Activated CD8-positive, alpha-beta T cell treated with anti-CD3 and anti-CD28 coated beads for 36 hours (primary cell): ENCODE measurements at regions of chr6 and their contacts with region 1.

Region 1: DNA sequence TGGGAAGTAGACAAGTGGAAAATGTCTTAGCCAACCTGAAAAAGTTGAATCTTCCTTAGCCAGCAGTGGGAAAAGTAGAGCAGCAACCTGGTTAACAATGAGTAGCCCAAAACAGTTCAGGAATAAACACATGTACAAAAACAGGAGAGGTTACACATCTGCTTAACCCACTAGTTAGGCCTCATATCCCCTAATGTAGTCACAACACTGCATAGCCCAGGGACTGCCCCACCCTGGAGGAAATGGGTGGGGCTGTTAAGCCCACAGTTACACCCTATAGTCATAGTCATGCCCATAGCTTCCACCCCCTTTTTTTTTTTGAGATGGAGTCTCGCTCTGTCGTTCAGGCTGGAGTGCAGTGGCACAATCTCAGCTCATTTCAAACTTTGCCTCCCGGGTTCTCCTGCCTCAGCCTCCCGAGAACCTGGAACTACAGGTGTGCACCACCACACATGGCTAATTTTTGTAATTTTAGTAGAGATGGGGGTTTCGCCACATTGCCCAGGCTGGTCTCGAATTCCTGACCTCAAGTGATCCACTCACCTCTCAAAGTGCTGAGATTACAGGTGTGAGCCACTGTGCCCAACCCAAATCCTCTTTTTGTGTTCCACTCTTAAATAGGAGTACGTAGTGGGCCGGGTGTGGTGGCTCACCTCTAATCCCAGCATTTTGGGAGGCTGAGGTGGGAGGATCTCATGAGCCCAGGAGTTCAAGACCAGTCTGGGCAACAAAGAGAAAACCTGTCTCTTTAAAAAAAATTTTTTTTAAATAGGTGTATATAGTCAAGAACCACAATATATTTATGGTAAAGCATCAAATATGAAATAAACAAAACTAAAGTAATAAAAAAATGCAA is 24.5 kb downstream of the ILRUN start:
- DNase-seq: peak; percentile 87
- ATAC-seq: peak; percentile 99
- H3K4me3 Mint-ChIP-seq: peak overlapping the region; percentile 55
- H3K27ac Mint-ChIP-seq: peak overlapping the region; percentile 94
- H3K4me1 Mint-ChIP-seq: peaks cover 60% of the 10 kb centered on the region
- H3K27me3 Mint-ChIP-seq: no peaks in the 10 kb centered on the region
- CTCF ChIP-seq: no peak

Region 2: DNA sequence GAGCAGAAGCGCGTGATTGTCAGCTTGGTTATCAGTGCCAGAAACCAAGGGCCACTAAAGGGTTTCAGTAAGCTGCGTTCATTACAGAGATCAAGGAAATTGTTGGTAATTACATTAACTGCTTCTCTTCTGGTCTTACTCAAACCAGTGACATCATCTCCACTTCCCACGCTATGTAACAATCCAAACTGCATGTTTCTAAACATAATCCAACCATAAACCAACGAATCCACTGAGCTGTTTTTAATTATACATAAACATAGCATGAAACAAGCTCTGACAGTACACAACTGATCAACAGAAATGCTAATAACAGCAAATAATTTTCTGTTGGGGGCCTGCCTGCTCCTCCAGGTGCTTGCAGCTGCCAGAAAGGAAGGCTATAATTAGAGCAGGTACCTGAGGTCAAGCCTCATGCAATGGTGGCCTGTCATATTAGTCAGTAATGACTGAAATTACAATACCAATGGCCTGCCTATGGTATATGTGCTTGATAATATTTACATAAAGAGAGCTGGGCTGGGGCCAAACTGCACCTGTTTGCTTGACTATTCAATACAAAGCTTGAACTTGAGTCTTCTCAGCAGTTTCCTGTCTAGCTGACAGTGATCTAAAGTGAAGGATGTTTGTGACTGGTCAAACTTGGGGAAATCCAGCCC is 15.5 kb before region 1 on chr6:
- CTCF ChIA-PET with region 1: interaction called, 17 read pairs
- POLR2A ChIA-PET with region 1: interaction called, 17 read pairs
- intact Hi-C with region 1: no loop called
- DNase-seq: peak; percentile 63
- ATAC-seq: peak; percentile 83
- H3K4me3 Mint-ChIP-seq: peak overlapping the region; percentile 62
- H3K27ac Mint-ChIP-seq: peak overlapping the region; percentile 92
- H3K4me1 Mint-ChIP-seq: peaks cover 49% of the 10 kb centered on the region
- H3K27me3 Mint-ChIP-seq: no peaks in the 10 kb centered on the region
- CTCF ChIP-seq: no peak

Region 3: GRCh38 chr6:34696739-34697543 is 24.9 kb after region 1 on chr6 and contains the start of gene ILRUN:
- CTCF ChIA-PET with region 1: interaction called, 11 read pairs
- POLR2A ChIA-PET with region 1: interaction called, 14 read pairs
- intact Hi-C with region 1: no loop called
- DNase-seq: peak; percentile 97
- ATAC-seq: peak; percentile 92
- H3K4me3 Mint-ChIP-seq: peak within 1 kb of the TSS; percentile 94
- H3K27ac Mint-ChIP-seq: peak within 1 kb of the TSS; percentile 98
- H3K4me1 Mint-ChIP-seq: peaks cover 43% of the 10 kb centered on the region
- H3K27me3 Mint-ChIP-seq: no peaks in the 10 kb centered on the region
- CTCF ChIP-seq: no peak
- total RNA-seq, gene ILRUN: 45.3 to 51.8 TPM

Region 4: DNA sequence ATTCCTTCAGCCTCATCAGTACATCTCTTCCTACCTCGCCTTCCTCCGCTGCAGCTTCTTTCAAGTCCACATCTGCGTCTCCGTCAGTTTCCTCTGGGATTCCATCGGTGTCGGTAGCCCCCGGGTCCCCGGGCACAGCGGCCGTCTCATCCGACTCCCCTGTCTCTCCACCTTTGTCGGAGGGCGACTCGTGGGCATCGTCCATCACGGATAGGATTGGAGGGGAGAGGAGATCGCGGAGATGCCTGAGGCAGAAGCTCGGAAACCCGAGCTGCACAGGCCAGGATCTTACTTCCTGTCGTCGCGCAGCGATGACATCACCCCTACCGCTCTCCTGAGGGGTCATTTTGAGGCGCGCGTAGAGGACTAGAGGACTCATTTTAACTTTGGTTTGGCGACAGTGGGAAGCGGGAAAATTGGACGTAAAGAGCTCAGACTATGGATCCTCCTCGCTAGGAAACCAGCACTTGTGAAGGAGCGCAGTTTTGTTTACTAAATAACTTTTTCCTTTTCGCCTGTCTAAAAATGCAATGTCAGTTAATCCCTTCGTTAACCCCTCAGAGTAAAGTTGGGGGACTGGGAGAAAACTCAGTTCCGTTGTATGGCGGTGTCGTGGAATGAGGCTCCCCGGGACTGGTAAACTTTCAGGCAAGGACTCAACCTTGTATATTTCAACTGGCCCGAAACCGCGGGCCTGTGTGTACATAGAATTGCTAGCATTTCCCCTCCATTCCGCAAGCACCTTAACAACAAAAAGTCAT is 215.9 kb after region 1 on chr6 and contains the start of gene TAF11:
- CTCF ChIA-PET with region 1: no interaction called
- POLR2A ChIA-PET with region 1: no interaction called
- intact Hi-C with region 1: no loop called
- DNase-seq: peak; percentile 96
- ATAC-seq: peak; percentile 84
- H3K4me3 Mint-ChIP-seq: peak within 1 kb of the TSS; percentile 100
- H3K27ac Mint-ChIP-seq: peak within 1 kb of the TSS; percentile 99
- H3K4me1 Mint-ChIP-seq: peaks cover 34% of the 10 kb centered on the region
- H3K27me3 Mint-ChIP-seq: no peaks in the 10 kb centered on the region
- CTCF ChIP-seq: no peak
- total RNA-seq, gene TAF11: 29.3 to 29.4 TPM